ENCODE measurements at regions of chr2 and their contacts with region 1.

Region 1: DNA sequence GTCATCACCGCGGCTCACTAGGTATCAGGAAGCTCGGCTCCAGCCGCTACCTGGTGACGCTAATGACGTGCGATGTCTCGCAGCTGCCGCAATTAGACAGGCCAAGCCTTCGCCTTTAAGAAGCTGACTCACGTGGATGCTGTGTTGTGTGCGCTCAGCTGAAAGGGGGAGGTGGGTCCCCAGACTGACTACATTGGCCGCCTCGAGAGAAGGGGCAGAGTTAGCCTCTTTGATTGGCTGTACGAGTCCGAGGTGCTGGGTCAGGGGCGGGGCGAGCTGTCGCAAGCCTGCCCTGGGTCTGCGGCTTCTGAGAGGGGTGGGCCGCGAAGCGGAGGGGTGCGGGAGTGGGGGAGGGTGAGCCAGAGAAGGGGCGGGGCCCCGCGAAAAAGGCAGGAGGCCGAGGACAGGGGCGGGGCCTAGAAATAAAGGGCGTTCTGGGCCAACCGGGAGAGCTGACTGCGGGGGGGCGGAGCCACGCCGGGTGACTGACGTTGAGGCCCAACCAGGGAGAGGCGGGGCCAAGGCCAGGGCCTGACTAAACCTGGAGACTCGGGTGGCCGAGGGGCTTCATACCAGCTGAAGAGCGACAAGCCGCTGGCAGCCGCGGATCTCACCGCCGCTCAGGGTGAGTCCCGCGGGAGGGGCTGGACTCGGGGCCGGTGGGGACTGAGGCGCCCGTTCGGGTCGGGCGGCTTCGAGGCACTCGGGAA is at the start of gene YPEL5:
- DNase-seq: peak; percentile 98 to 100 (median 100)
- ATAC-seq: peak; percentile 88
- H3K4me3 ChIP-seq: peak within 1 kb of the TSS; percentile 74
- H3K4me3 Mint-ChIP-seq: peak within 1 kb of the TSS; percentile 83 to 93 (median 88)
- H3K27ac ChIP-seq: peak within 1 kb of the TSS; percentile 100
- H3K27ac Mint-ChIP-seq: peak within 1 kb of the TSS; percentile 99 to 100 (median 99)
- H3K4me1 ChIP-seq: peaks cover 31 to 40% of the 10 kb centered on the region in 2 donors
- H3K4me1 Mint-ChIP-seq: peaks cover 38 to 75% (median 56%) of the 10 kb centered on the region in 7 donors
- H3K27me3 ChIP-seq: no peaks in the 10 kb centered on the region
- H3K27me3 Mint-ChIP-seq: no peaks in the 10 kb centered on the region
- total RNA-seq, gene YPEL5: 30.9 to 1,022 (median 98.3) TPM

Region 2: DNA sequence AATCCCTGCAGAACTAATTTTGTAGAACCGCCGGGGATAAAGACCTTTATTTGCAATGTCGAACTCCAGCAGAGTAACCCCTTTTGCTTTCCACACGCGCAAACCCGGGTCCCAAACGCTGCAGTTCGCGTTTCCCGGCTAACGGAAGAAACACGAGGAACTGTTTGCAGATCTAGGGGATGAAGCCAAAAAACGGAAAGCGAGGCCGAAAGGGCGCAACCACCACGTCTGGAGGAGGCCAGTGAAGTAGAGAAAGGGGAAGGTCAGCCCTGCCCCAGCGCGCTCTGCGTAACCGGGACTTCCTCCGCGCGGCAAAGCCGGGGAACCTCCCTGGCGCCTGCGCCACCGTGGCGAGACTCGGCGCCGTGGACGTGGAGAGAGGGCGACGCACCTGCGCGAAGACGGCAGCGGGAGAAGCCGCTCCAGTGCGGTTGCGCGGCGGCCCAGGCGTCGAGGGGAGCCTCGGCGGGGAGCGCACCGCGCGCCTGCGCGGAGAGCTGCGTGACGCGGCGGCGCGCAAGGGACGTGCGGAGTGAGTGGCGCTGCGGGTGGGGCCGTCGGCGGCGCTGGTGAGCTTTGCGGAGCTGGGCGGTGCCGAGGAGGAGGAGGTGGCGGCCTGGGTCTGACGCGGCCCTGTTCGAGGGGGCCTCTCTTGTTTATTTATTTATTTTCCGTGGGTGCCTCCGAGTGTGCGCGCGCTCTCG is 1395.2 kb before region 1 on chr2 and contains the start of gene PPP1CB:
- CTCF ChIA-PET with region 1: no interaction called
- POLR2A ChIA-PET with region 1: no interaction called
- intact Hi-C with region 1: loop called in 1 of 2 experiments (anchors 2 kb)
- DNase-seq: peak; percentile 95 to 99 (median 99)
- ATAC-seq: peak; percentile 92
- H3K4me3 ChIP-seq: peak within 1 kb of the TSS; percentile 97
- H3K4me3 Mint-ChIP-seq: peak within 1 kb of the TSS; percentile 93 to 100 (median 96)
- H3K27ac ChIP-seq: peak within 1 kb of the TSS; percentile 99
- H3K27ac Mint-ChIP-seq: peak within 1 kb of the TSS; percentile 96 to 99 (median 98)
- H3K4me1 ChIP-seq: peaks cover 42 to 44% of the 10 kb centered on the region in 2 donors
- H3K4me1 Mint-ChIP-seq: peaks cover 35 to 67% (median 64%) of the 10 kb centered on the region in 7 donors
- H3K27me3 ChIP-seq: no peaks in the 10 kb centered on the region
- H3K27me3 Mint-ChIP-seq: no peaks in the 10 kb centered on the region
- total RNA-seq, gene PPP1CB: 202 to 223 (median 210) TPM

Region 3: GRCh38 chr2:29115797-29116781 is 1030.5 kb before region 1 on chr2:
- CTCF ChIA-PET with region 1: no interaction called
- POLR2A ChIA-PET with region 1: no interaction called
- intact Hi-C with region 1: loop called in 1 of 2 experiments (anchors 2 kb)
- DNase-seq: peak; percentile 39 to 82 (median 75)
- ATAC-seq: peak; percentile 62
- H3K4me3 ChIP-seq: peak overlapping the region; percentile 75
- H3K4me3 Mint-ChIP-seq: peak overlapping the region; percentile 86 to 98 (median 88)
- H3K27ac ChIP-seq: peak overlapping the region; percentile 73
- H3K27ac Mint-ChIP-seq: peak overlapping the region; percentile 87 to 99 (median 97)
- H3K4me1 ChIP-seq: peaks cover 8 to 20% of the 10 kb centered on the region in 2 donors
- H3K4me1 Mint-ChIP-seq: peaks cover 23 to 61% (median 55%) of the 10 kb centered on the region in 7 donors
- H3K27me3 ChIP-seq: no peaks in the 10 kb centered on the region
- H3K27me3 Mint-ChIP-seq: peaks cover 0 to 12% (median 0%) of the 10 kb centered on the region in 5 donors

Region 4: GRCh38 chr2:30225131-30225762 is 78.7 kb after region 1 on chr2:
- CTCF ChIA-PET with region 1: interaction called, 3 read pairs
- POLR2A ChIA-PET with region 1: interaction called, 119 read pairs
- intact Hi-C with region 1: loop called (anchors 1 kb)
- DNase-seq: peak in 8 of 9 donors; percentile 46 to 77 (median 72)
- ATAC-seq: peak; percentile 81
- H3K4me3 ChIP-seq: peak overlapping the region; percentile 67
- H3K4me3 Mint-ChIP-seq: peak overlapping the region; percentile 87 to 99 (median 94)
- H3K27ac ChIP-seq: peak overlapping the region; percentile 95
- H3K27ac Mint-ChIP-seq: peak overlapping the region; percentile 95 to 100 (median 100)
- H3K4me1 ChIP-seq: peaks cover 63 to 67% of the 10 kb centered on the region in 2 donors
- H3K4me1 Mint-ChIP-seq: peaks cover 48 to 86% (median 76%) of the 10 kb centered on the region in 7 donors
- H3K27me3 ChIP-seq: no peaks in the 10 kb centered on the region
- H3K27me3 Mint-ChIP-seq: peaks cover 0 to 3% (median 0%) of the 10 kb centered on the region in 5 donors

Region 5: GRCh38 chr2:30336978-30337841 is 190.6 kb after region 1 on chr2:
- CTCF ChIA-PET with region 1: no interaction called
- POLR2A ChIA-PET with region 1: interaction called, 5 read pairs
- intact Hi-C with region 1: loop called (anchors 1 kb)
- DNase-seq: peak; percentile 11 to 74 (median 69)
- ATAC-seq: peak; percentile 89
- H3K4me3 ChIP-seq: peak overlapping the region; percentile 46
- H3K4me3 Mint-ChIP-seq: peak overlapping the region; percentile 69 to 92 (median 85)
- H3K27ac ChIP-seq: peak overlapping the region; percentile 71
- H3K27ac Mint-ChIP-seq: peak overlapping the region; percentile 95 to 100 (median 98)
- H3K4me1 ChIP-seq: peaks cover 60 to 71% of the 10 kb centered on the region in 2 donors
- H3K4me1 Mint-ChIP-seq: peaks cover 57 to 87% (median 84%) of the 10 kb centered on the region in 7 donors
- H3K27me3 ChIP-seq: no peaks in the 10 kb centered on the region
- H3K27me3 Mint-ChIP-seq: no peaks in the 10 kb centered on the region

Region 6: DNA sequence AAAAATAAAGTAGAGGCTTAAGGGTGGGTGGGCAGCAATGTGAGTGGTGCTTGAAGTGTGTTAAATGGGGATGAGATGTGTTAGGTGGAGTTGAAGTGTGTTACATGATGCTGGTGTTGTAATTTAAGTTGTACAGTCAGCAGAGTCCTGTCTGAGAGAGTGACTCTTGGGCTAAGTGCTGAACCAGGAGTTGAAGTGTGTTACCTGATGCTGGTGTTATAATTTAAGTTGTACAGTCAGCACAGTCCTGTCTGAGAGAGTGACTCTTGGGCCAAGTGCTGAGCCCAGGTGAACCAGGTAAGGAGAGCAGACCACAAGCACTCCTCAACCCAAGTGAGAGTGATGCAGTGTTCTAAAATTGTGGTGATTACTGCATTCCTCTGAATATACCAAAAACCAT is 341.0 kb after region 1 on chr2:
- CTCF ChIA-PET with region 1: no interaction called
- POLR2A ChIA-PET with region 1: no interaction called
- intact Hi-C with region 1: no loop called
- DNase-seq: no peak
- ATAC-seq: no peak
- H3K4me3 ChIP-seq: no peak overlapping the region
- H3K4me3 Mint-ChIP-seq: peak overlapping the region in 2 of 10 donors; percentile 0 to 34
- H3K27ac ChIP-seq: no peak overlapping the region
- H3K27ac Mint-ChIP-seq: peak overlapping the region in 1 of 9 donors; percentile 67
- H3K4me1 ChIP-seq: peaks cover 0 to 26% of the 10 kb centered on the region in 2 donors
- H3K4me1 Mint-ChIP-seq: peaks cover 11 to 62% (median 39%) of the 10 kb centered on the region in 7 donors
- H3K27me3 ChIP-seq: no peaks in the 10 kb centered on the region
- H3K27me3 Mint-ChIP-seq: no peaks in the 10 kb centered on the region

Region 7: GRCh38 chr2:31233741-31234682 is 1087.4 kb after region 1 on chr2 and contains the start of gene EHD3:
- CTCF ChIA-PET with region 1: no interaction called
- POLR2A ChIA-PET with region 1: no interaction called
- intact Hi-C with region 1: loop called in 1 of 2 experiments (anchors 1 kb)
- DNase-seq: peak; percentile 53 to 80 (median 67)
- ATAC-seq: peak; percentile 95
- H3K4me3 ChIP-seq: peak within 1 kb of the TSS; percentile 75
- H3K4me3 Mint-ChIP-seq: peak within 1 kb of the TSS; percentile 74 to 89 (median 83)
- H3K27ac ChIP-seq: peak within 1 kb of the TSS; percentile 32
- H3K27ac Mint-ChIP-seq: peak within 1 kb of the TSS; percentile 12 to 85 (median 72)
- H3K4me1 ChIP-seq: peaks cover 4 to 14% of the 10 kb centered on the region in 2 donors
- H3K4me1 Mint-ChIP-seq: peaks cover 8 to 33% (median 25%) of the 10 kb centered on the region in 7 donors
- H3K27me3 ChIP-seq: no peaks in the 10 kb centered on the region
- H3K27me3 Mint-ChIP-seq: peaks cover 0 to 22% (median 0%) of the 10 kb centered on the region in 5 donors
- total RNA-seq, gene EHD3: 1.6 to 4.5 (median 3.5) TPM

Region 8: DNA sequence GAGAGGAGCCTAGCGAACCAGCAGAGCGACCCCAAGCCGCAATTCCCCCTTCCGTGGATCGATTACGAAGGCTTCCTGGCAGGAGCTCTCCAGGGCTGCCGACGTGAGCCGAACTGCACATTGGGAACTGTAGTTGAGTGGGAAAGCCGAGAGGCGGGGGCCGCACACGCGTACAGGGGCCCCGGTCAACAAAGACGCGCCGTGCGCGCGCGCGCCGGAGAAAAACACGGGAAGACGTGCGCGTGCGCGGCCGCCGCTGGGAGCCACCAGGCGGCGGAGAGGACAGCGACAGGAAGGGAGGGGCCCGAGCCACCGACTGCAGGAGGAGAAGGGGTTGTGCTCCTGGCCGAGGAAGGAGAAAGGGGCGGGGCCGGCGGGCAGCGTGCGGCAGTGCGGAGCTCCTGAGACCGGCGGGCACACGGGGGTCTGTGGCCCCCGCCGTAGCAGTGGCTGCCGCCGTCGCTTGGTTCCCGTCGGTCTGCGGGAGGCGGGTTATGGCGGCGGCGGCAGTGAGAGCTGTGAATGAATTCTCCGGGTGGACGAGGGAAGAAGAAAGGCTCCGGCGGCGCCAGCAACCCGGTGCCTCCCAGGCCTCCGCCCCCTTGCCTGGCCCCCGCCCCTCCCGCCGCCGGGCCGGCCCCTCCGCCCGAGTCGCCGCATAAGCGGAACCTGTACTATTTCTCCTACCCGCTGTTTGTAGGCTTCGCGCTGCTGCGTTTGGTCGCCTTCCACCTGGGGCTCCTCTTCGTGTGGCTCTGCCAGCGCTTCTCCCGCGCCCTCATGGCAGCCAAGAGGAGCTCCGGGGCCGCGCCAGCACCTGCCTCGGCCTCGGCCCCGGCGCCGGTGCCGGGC is 1916.9 kb after region 1 on chr2 and contains the start of gene SPAST:
- CTCF ChIA-PET with region 1: no interaction called
- POLR2A ChIA-PET with region 1: no interaction called
- intact Hi-C with region 1: loop called (anchors 1 to 5 kb)
- DNase-seq: peak; percentile 92 to 97 (median 95)
- ATAC-seq: peak; percentile 93
- H3K4me3 ChIP-seq: peak within 1 kb of the TSS; percentile 99
- H3K4me3 Mint-ChIP-seq: peak within 1 kb of the TSS; percentile 91 to 100 (median 98)
- H3K27ac ChIP-seq: peak within 1 kb of the TSS; percentile 88
- H3K27ac Mint-ChIP-seq: peak within 1 kb of the TSS; percentile 88 to 97 (median 92)
- H3K4me1 ChIP-seq: peaks cover 5 to 15% of the 10 kb centered on the region in 2 donors
- H3K4me1 Mint-ChIP-seq: peaks cover 22 to 46% (median 37%) of the 10 kb centered on the region in 7 donors
- H3K27me3 ChIP-seq: no peaks in the 10 kb centered on the region
- H3K27me3 Mint-ChIP-seq: peaks cover 0 to 1% (median 0%) of the 10 kb centered on the region in 5 donors
- total RNA-seq, gene SPAST: 16.3 to 21.0 (median 20.3) TPM

Measured in naive thymus-derived CD4-positive, alpha-beta T cell (primary cell).